Dorsolateral prefrontal cortex (tissue), 120 donors: ENCODE measurements at regions of chr18 and their contacts with region 1.

Region 1: DNA sequence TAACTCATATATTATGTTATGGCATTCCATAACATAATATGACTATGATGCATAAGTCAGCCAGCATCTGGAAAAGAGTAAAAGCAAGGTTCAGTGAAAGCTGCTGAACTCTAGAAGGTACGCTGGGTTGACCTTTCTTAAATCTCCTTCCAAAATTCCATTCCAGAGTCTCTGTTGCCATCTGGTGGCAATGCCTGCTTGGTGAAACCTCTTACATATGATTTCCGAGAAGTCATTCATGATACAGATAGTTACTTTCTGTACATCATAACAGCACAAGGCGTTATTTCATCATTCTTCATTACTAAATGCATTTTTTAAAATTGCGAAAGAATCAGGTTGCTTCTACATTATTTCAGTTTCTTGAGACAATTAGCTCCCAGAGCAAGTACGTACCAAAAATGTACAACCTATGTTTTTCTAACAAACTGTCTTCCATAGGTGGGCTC is 7.0 kb upstream of the EPG5 start:
- DNase-seq: peak in 3 of 10 donors; percentile 43 to 69 (median 57)
- H3K4me3 ChIP-seq: peak overlapping the region in 26 of 59 donors; percentile 2 to 39 (median 26)
- H3K27ac ChIP-seq: no peak overlapping the region
- H3K27me3 ChIP-seq: no peaks in the 10 kb centered on the region
- CTCF ChIP-seq: peak; percentile 44 to 88 (median 75)

Region 2: GRCh38 chr18:45664824-45665763 is 309.0 kb before region 1 on chr18:
- intact Hi-C with region 1: loop called (anchors 10 kb)
- DNase-seq: peak in 8 of 10 donors; percentile 38 to 79 (median 62)
- H3K4me3 ChIP-seq: no peak overlapping the region
- H3K27ac ChIP-seq: no peak overlapping the region
- H3K27me3 ChIP-seq: no peaks in the 10 kb centered on the region
- CTCF ChIP-seq: peak; percentile 51 to 93 (median 88)

Region 3: DNA sequence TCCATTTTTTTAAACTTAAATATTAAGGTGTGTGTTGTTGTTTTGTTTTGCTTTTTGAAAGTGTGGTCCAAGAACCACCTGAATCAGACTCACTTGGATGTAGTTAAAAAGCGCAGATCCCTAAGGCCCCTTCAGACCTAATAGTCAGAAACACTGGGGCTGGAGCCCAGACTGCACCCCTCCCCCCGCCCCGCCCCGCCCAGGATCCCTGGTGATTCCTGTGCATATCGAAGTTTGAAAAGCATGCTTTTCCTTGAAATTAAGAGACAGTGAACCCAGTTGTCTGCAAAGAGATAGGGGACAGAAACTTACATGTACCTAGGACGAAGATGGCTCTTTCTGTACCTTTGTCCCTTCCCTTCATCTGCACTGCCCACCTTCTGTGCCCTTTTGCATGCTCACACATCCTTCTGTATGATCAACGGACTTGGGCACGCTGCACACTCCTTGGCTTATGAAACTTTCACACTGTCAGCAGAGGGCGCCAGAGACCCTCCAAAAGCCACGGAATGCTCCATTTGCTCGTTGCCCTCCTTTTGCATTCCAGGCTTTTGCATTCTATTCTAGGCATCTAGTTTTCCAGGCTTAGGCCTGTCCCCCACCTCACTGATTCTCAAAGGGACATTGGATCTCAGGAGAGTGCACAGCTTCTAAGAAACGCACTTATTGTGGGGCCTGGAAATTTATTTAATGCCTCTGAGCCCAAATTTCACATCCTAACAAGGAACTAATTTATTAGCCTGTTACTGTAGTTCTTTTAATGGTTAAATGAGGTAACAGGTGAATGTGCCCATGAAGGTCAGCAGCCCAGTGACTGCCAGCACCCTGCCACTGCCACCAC is 282.9 kb before region 1 on chr18:
- intact Hi-C with region 1: loop called in 1 of 2 experiments (anchors 2 kb)
- DNase-seq: peak in 9 of 10 donors; percentile 60 to 85 (median 76)
- H3K4me3 ChIP-seq: no peak overlapping the region
- H3K27ac ChIP-seq: no peak overlapping the region
- H3K27me3 ChIP-seq: no peaks in the 10 kb centered on the region
- CTCF ChIP-seq: peak; percentile 49 to 96 (median 85)